Posterior vena cava (tissue), 2 donors: ENCODE measurements at regions of chr2 and their contacts with region 1.

Region 1: DNA sequence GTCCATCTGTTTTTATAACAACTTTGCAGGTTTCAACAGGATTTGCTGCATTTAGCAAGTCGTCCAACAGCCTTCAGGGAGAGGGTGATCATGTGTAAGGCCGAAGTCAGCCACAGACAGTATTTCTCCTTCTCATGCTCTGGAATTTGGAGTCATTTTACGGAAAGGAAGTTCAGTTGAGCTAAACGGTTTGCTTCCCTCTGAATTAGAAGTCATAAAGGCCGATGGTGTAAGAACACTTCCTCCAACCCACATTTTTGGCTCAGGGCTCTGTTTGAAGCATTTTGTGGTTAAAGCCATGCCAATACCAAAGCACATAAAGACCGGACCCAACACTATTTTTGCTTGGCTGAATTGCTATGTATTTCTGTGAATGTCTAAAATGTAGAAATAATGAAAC is 129.5 kb downstream of the TMEM182 start:
- DNase-seq: no peak

Region 2: GRCh38 chr2:102915128-102915527 is 23.8 kb after region 1 on chr2:
- intact Hi-C with region 1: loop called in 1 of 2 experiments (anchors 2 kb)
- DNase-seq: no peak

Region 3: DNA sequence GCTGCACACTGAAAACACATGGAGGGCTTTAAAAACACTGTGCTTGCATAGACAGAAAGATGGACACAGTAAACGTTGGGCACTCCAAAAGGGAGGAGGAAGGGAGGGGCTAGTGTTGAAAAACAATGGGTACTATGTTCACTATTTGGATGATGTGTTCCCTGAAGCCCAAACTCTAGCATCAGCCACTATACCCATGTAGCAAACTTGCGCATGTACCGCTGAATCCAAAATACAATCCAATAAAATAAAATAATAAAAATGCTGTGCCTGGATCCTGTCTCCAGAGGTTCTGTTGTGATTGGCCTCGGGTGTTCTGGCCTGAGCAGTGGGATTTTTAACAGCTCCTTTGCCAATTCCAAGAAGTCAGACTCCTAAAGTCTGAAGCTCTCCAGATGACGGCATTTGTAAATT is 36.6 kb after region 1 on chr2:
- intact Hi-C with region 1: no loop called
- DNase-seq: no peak

Region 4: GRCh38 chr2:102940684-102941083 is 49.4 kb after region 1 on chr2:
- intact Hi-C with region 1: no loop called
- DNase-seq: no peak

Region 5: GRCh38 chr2:103028181-103028580 is 136.9 kb after region 1 on chr2:
- intact Hi-C with region 1: no loop called
- DNase-seq: no peak

Region 6: GRCh38 chr2:103459291-103459690 is 568.0 kb after region 1 on chr2:
- intact Hi-C with region 1: no loop called
- DNase-seq: no peak